Esophagus muscularis mucosa (tissue), 4 donors: ENCODE measurements at regions of chr7 and their contacts with region 1.

Region 1: DNA sequence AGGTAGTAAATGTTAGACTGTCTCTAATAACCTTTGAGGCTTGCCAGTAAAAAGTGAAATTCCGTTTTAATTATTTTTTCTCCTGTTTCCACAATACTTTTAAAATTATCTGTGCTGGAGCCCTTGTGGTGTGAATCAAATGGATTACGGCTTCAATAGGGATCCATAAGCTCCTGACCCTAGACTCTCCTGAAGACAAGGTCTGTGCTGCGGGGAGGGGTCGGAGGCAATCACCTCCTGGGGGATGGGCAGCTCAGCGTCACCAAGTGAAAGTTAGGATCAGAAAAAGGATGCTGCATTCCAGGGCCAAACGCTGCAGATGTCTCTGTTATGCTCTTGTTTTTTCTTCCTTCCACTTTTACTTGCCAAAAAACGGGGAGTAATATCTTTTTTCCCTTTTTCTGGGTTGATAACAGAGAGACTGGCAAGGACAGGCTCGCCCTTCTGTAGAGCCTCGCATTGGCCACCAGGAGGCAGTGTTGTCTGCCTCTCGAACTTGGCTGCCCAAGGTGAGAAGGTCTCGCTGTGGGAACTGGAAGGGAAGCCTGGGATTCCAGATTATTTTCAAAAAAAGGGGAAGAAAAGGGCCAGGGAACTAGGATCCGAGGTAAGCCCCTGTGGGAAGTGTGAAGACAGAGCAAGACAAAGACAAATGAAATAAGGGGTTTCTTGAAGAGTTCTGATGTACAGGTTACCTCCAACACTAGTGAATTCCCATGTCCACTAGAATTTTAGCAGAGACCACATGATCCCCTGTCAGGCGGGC is 621.9 kb downstream of the ACTR3B start:
- DNase-seq: peak; percentile 89
- H3K4me3 ChIP-seq: peak overlapping the region; percentile 25 to 45 (median 30)
- H3K27ac ChIP-seq: peak overlapping the region in 3 of 4 donors; percentile 57 to 65 (median 59)
- H3K4me1 ChIP-seq: peaks cover 0 to 50% (median 46%) of the 10 kb centered on the region in 4 donors
- H3K27me3 ChIP-seq: no peaks in the 10 kb centered on the region
- CTCF ChIP-seq: peak; percentile 92 to 97 (median 94)
- EP300 ChIP-seq: no peak
- POLR2A ChIP-seq: no peak

Region 2: DNA sequence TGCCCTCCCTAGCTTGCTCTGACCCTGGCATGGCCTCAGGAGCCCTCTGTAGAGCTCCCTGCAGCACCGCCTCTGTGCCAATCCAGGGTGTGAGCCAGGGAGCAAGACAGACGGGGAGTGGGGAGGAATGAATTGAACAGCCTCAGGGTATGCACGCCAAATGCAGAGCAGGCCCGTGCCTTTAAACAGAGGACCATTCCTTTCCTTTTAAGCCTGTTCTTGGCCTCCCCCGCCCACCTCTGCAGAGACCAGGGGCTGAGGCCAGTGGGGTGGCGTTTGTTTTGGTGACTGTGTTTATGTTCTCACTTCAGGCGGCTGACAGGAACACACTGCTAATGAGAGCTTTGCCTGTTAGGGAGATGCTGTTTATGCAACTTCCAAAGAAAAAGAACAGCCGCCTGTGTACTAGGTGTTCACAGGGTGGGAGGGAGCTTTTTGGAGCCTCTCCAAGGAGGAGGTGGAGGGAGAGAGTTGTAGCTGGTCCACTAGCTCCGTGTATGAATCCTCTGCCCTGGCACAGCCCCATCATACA is 142.7 kb after region 1 on chr7:
- intact Hi-C with region 1: loop called (anchors 5 kb)
- DNase-seq: peak; percentile 94
- H3K4me3 ChIP-seq: no peak overlapping the region
- H3K27ac ChIP-seq: peak overlapping the region; percentile 89 to 90 (median 90)
- H3K4me1 ChIP-seq: peaks cover 2 to 69% (median 58%) of the 10 kb centered on the region in 4 donors
- H3K27me3 ChIP-seq: no peaks in the 10 kb centered on the region
- CTCF ChIP-seq: no peak
- EP300 ChIP-seq: peak; percentile 94
- POLR2A ChIP-seq: no peak

Region 3: GRCh38 chr7:153835104-153835503 is 453.6 kb after region 1 on chr7:
- intact Hi-C with region 1: loop called (anchors 2 kb)
- DNase-seq: no peak
- H3K4me3 ChIP-seq: peak overlapping the region in 2 of 4 donors; percentile 7 to 16
- H3K27ac ChIP-seq: peak overlapping the region; percentile 55 to 62 (median 58)
- H3K4me1 ChIP-seq: peaks cover 0 to 26% (median 17%) of the 10 kb centered on the region in 4 donors
- H3K27me3 ChIP-seq: no peaks in the 10 kb centered on the region
- CTCF ChIP-seq: peak; percentile 44 to 53 (median 52)
- EP300 ChIP-seq: no peak
- POLR2A ChIP-seq: no peak